Lower leg skin (tissue), 4 donors: ENCODE measurements at regions of chr2 and their contacts with region 1.

Region 1: DNA sequence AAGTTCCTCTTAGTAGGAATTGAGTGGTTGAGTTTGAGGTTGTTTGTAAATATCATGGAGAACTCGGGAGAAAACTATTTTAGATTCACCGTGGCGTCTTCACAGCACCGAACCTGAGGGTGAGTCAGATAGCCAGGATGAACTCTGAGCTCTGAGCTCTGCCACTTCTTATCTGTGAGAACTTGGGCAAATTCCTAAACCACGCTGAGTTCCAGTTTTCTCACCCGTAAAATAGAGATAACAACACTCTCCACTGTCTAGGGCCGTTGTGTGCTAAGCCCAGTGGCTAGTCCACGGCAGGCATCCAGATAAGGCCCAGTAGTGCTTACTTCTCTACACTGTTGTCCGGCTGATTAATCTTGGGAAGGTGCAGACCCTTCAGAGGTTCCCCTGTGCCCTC is 7.0 kb downstream of the KIF5C start:
- DNase-seq: no peak
- H3K4me3 ChIP-seq: no peak overlapping the region
- CTCF ChIP-seq: no peak
- POLR2A ChIP-seq: no peak

Region 2: DNA sequence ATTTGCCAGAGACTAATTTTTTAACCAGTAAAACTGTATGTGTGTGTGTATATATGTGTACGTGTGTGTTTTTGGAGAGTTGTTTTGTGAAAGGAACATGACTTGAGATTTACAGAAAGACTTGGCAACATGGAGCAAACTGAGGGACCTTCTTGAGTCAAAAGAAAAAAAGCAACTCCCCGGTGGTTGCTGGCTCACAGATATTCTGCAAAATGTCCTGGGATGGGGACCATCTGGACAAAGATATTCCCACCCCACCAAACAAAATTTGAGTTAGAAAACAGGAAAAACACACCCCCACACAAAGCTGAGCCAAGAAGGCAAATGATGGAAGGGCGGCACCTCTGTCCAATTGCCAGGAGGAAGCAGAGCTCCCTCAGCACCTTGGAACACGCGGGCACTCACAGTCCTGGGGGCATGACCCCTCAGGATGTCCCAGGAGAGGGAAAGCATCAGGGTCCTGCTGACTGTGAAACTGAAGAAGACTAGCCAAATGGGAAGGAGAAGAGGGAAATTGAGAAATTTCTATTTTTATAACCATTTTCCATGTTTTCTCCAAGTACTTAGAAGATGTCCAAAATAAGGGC is 1327.4 kb before region 1 on chr2:
- intact Hi-C with region 1: loop called (anchors 5 kb)
- DNase-seq: no peak
- H3K4me3 ChIP-seq: no peak overlapping the region
- CTCF ChIP-seq: no peak
- POLR2A ChIP-seq: no peak

Region 3: DNA sequence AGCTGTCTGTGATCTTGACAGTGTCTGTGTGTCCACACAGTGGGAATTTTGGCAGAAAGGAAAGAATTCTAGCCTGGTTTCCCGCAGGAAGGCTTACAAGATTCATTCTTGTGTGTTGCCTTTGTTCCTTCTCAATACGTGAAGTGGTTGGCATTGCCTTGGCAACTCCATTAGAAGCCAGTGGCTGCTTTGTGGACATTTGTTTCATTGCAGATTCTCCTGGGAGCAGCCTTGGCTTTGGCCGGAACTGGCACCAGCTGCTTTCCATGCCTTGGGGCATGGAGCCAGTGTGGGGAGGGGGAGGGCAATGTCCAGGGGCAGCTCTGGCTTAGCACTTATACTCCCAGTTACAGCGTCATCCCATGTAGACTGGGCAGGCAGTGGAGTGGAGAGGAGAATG is 32.4 kb after region 1 on chr2:
- intact Hi-C with region 1: no loop called
- DNase-seq: no peak
- H3K4me3 ChIP-seq: no peak overlapping the region
- CTCF ChIP-seq: no peak
- POLR2A ChIP-seq: no peak